Activated CD8-positive, alpha-beta T cell treated with anti-CD3 and anti-CD28 coated beads, Interleukin-2, amount 10 ng/mL, durations not matched to agents 7 days and 5 days (primary cell): ENCODE measurements at regions of chr2 and their contacts with region 1.

Region 1: DNA sequence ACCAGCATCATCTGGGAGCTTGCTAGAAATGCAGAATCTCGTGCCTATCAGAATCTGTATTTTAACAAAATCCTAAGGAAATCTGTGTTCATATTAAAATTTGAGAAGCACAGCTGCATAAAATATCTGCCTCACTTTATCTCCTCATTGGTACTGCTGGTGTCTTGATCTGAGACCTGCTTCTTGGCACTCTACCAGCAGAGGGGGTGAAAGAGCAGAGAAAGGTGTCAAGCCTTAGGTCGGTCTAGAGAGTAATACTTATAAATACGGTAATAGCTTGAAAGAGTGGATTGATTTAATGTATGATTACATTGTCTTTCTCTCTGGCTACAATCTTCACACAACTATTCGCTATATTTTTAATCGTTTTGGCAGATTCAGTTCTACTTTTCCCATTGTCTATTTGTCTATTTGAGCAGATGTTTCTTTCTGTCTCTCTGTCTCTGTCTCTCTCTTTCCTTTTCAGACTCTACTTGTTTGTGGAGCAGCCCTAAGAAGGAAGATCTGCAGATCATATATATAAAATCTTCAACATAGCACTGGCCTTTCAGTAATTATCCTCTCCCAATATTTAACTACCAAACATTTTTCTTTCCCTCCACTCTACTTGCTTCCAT is 1.7 kb upstream of the GCG start:
- DNase-seq: peak; percentile 76
- ATAC-seq: peak; percentile 92
- H3K4me3 Mint-ChIP-seq: no peak overlapping the region
- H3K27ac Mint-ChIP-seq: no peak overlapping the region
- H3K4me1 Mint-ChIP-seq: peaks cover 2% of the 10 kb centered on the region
- H3K27me3 Mint-ChIP-seq: peaks cover 36% of the 10 kb centered on the region

Region 2: DNA sequence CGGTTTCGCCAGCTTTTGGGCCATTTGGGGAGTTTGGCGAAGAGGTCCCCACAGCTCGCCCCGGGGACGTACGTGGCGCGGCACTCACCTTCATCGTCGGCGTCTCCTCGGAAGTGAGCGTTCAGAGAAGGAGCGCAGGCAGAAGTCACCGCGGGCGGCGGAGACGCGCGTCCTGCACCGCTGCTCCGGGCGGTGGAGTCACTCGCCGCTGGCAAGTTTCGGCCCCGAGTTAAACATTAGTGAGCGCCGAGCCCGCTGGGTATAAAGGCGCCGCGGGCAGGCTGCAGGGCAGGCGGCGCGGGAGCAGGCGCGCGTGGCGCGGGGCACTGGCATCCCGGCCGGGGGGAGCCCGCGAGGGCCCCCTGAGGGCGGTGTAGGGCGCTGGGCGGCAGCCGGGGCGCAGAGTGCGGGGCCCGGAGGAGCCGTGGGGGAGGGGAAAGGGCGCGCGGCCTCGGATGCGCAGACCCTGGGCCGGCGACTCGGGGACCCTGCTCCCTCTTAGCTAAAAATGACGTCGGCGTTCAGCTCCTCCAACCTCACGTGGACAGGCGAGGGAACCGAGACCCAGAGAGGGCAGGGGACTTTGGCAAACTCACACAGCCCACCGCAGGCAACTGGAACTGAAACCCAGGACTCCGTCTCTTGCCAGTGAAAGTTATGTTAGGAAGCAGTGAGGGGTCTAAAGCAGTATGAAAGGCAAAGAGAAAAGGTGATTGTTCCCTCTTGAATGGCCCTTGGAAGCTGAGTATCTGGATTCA is 79.6 kb before region 1 on chr2 and contains the start of gene DPP4:
- CTCF ChIA-PET with region 1: no interaction called
- POLR2A ChIA-PET with region 1: no interaction called
- DNase-seq: peak; percentile 66
- ATAC-seq: peak; percentile 83
- H3K4me3 Mint-ChIP-seq: peak within 1 kb of the TSS; percentile 95
- H3K27ac Mint-ChIP-seq: peak within 1 kb of the TSS; percentile 93
- H3K4me1 Mint-ChIP-seq: peaks cover 44% of the 10 kb centered on the region
- H3K27me3 Mint-ChIP-seq: no peaks in the 10 kb centered on the region
- total RNA-seq, gene DPP4: 158 TPM

Region 3: GRCh38 chr2:162113776-162114168 is 39.9 kb before region 1 on chr2:
- CTCF ChIA-PET with region 1: no interaction called
- POLR2A ChIA-PET with region 1: no interaction called
- DNase-seq: no peak
- ATAC-seq: no peak
- H3K4me3 Mint-ChIP-seq: no peak overlapping the region
- H3K27ac Mint-ChIP-seq: no peak overlapping the region
- H3K4me1 Mint-ChIP-seq: peaks cover 22% of the 10 kb centered on the region
- H3K27me3 Mint-ChIP-seq: no peaks in the 10 kb centered on the region

Region 4: DNA sequence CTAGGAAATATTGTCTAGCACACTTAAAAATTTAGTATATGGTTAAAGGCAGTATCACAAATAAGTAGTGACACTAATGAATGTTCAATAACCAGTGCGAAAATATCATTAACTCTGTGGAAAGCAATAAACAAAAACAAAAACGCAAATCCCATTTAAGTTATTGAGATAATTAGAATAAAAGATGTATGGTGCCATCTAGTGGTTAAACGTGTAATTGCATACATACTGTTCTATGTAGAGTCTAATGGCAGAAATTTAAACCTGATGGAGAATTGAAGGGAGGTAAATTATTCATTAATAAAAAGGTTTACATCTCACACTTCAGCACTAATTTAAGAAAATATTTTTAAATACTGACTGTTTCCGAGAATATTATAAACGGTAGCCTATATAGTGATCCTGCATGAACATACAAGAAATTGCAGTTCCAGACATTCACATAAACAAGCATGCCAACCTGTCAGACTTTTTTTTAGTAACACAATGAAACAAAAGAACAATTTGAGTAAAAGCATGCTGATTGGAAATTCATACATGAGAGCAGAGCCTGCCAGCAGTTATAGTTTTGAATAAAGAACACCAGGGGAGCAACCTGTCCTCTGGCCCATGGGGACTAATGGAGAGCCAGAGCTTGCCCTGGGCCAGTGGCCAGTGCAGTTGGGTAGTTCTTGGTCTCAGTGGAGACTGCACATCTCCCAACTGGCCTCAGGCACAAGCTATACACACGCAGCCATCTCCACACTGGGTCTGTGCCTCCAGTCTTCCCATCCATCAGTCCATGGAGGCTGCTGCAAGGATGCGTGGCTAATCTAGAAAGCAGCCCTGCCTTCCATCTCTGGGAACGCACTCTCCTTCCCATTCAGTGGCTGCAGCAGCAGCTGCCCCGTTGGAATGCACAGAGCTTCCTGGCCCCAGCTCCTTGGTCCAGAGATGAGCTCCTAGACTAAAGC is 29.6 kb before region 1 on chr2:
- CTCF ChIA-PET with region 1: interaction called, 12 read pairs
- POLR2A ChIA-PET with region 1: no interaction called
- DNase-seq: no peak
- ATAC-seq: peak; percentile 68
- H3K4me3 Mint-ChIP-seq: no peak overlapping the region
- H3K27ac Mint-ChIP-seq: no peak overlapping the region
- H3K4me1 Mint-ChIP-seq: peaks cover 26% of the 10 kb centered on the region
- H3K27me3 Mint-ChIP-seq: peaks cover 4% of the 10 kb centered on the region

Region 5: DNA sequence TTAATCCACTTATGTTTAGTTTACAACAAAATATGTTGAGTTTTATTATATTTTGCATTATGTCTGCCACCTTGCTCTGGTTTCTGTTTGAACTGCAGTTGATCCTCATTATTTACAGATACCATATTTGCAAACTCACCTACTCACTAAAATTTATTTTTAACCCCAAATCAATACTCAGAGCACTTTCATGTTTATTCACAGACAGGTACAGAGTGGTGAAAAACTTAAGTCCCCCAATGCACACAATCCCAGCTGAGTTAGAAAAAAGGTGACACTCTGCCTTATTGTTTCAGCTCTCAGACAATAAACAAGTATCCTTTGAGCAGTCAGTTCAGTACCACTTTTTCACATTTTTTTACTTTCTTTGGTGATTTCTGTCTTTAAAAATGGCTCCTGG is 15.4 kb before region 1 on chr2:
- CTCF ChIA-PET with region 1: interaction called, 12 read pairs
- POLR2A ChIA-PET with region 1: no interaction called
- DNase-seq: no peak
- ATAC-seq: no peak
- H3K4me3 Mint-ChIP-seq: no peak overlapping the region
- H3K27ac Mint-ChIP-seq: no peak overlapping the region
- H3K4me1 Mint-ChIP-seq: no peaks in the 10 kb centered on the region
- H3K27me3 Mint-ChIP-seq: peaks cover 14% of the 10 kb centered on the region

Region 6: GRCh38 chr2:162174746-162175145 is 21.0 kb after region 1 on chr2:
- CTCF ChIA-PET with region 1: interaction called, 11 read pairs
- POLR2A ChIA-PET with region 1: no interaction called
- DNase-seq: no peak
- ATAC-seq: no peak
- H3K4me3 Mint-ChIP-seq: no peak overlapping the region
- H3K27ac Mint-ChIP-seq: no peak overlapping the region
- H3K4me1 Mint-ChIP-seq: peaks cover 7% of the 10 kb centered on the region
- H3K27me3 Mint-ChIP-seq: peaks cover 33% of the 10 kb centered on the region